WTC11 (cell line): ENCODE measurements at regions of chr7 and their contacts with region 1.

Region 1: DNA sequence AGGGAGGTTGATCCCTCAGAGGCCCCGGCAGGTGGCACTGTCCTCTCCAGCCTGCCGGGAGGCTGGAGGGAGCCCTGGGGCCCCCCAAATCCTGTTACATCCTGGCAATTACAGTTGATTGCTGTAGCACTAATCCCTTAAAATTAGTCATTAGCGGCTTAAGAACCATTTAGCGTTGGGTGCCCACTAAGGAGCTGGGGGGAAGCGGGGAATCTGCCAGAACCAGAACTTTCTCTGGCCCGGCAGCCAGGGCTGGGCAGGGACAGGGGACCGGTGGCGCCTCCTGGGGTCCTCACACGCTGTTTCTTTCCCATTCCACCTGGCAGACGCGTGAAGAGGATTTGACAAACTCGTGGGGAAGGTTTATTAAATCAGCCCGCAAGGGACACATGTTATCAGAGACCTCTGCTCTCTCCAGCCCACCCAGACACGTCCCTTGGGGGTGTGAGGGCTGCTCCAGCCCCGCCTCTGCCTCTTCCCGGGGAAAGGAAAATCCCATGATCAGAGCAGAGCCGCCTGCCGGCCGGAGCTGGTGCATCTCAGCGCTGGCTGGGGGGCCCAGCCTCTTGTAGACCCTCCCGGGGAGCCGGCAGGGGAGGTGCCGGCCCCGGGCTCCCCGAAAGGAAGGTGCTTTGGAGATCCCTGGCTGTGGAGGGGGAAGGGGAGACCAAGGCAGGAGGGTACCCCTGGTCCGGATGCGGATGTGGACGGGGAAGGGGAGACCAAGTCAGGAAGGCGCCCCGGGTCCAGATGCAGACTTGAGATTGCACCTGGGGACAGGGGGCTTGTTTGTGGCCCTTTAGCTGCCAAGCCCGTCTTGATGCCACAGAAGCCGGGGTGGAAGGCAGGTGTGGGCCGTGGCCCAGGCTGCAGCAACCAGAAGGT is 142.7 kb downstream of the ELFN1 start:
- DNase-seq: peak; percentile 42
- ATAC-seq: peak; percentile 67
- H3K4me3 Mint-ChIP-seq: peak overlapping the region; percentile 24; the same call in 1 of the 2 replicates
- H3K27ac Mint-ChIP-seq: no peak overlapping the region
- H3K4me1 Mint-ChIP-seq: no peaks in the 10 kb centered on the region
- H3K27me3 Mint-ChIP-seq: no peaks in the 10 kb centered on the region
- CTCF ChIP-seq: no peak

Region 2: DNA sequence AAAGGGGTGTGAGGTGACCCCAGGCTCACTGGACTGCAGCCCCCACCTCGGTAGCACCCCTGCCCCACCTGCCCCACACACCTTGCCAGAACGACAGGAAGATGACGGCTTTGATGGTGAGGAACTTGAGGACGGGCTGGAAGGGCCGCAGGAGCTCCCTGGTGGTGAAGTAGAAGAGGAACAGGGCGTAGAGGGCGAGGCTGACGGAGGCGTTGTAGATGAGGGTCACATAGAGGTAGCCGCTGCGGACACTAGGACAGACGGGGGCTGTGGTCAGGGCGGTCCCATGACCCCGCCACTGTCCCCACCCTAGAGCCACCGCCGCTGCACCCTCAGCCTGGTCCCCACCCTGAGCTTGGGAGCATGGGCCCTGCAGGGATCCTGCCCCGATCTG is 264.3 kb before region 1 on chr7:
- CTCF ChIA-PET with region 1: no interaction called
- POLR2A ChIA-PET with region 1: no interaction called
- DNase-seq: no peak
- ATAC-seq: peak; percentile 37
- H3K4me3 Mint-ChIP-seq: no peak overlapping the region
- H3K27ac Mint-ChIP-seq: peak overlapping the region; percentile 74; the same call in 1 of the 2 replicates
- H3K4me1 Mint-ChIP-seq: no peaks in the 10 kb centered on the region
- H3K27me3 Mint-ChIP-seq: no peaks in the 10 kb centered on the region
- CTCF ChIP-seq: no peak

Region 3: GRCh38 chr7:1767524-1767923 is 45.2 kb before region 1 on chr7:
- CTCF ChIA-PET with region 1: interaction called, 11 read pairs
- POLR2A ChIA-PET with region 1: no interaction called
- DNase-seq: peak; percentile 61
- ATAC-seq: peak; percentile 62; the same call in 1 of the 2 replicates
- H3K4me3 Mint-ChIP-seq: no peak overlapping the region
- H3K27ac Mint-ChIP-seq: no peak overlapping the region
- H3K4me1 Mint-ChIP-seq: no peaks in the 10 kb centered on the region
- H3K27me3 Mint-ChIP-seq: no peaks in the 10 kb centered on the region
- CTCF ChIP-seq: 0 out of 2 replicates have a peak, but pooled peaks have one; percentile 38